ENCODE measurements at regions of chr19 and their contacts with region 1.

Region 1: DNA sequence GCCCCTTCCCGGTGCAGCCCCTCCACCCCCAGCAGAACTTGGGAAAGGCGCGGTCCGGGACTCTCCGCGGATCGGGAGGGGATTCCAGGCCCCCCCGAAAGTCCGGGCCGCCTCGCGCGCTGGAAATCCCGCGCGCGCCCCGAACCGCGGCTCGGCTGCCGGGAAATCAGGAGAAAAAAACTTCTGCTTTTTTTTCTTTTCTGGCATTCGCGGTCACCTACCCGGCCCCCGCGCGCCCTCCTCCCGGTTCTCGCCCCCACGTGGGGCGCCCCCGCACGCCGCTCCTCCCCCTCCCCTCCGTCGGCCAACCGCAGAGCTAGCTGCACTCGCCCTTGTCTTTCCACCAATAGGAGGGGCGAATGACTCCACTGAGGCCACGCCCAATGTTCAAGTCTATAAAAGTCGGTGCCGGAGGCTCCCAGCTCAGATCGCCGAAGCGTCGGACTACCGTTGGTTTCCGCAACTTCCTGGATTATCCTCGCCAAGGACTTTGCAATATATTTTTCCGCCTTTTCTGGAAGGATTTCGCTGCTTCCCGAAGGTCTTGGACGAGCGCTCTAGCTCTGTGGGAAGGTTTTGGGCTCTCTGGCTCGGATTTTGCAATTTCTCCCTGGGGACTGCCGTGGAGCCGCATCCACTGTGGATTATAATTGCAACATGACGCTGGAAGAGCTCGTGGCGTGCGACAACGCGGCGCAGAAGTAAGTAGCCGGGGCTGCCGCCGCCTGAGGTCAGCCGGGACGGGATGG is at the start of gene GADD45B:
- DNase-seq: peak; percentile 98
- ATAC-seq: peak; percentile 46
- H3K4me3 Mint-ChIP-seq: peak within 1 kb of the TSS; percentile 94
- H3K27ac Mint-ChIP-seq: peak within 1 kb of the TSS; percentile 87
- H3K4me1 Mint-ChIP-seq: peaks cover 10% of the 10 kb centered on the region
- H3K27me3 Mint-ChIP-seq: no peaks in the 10 kb centered on the region
- total RNA-seq, gene GADD45B: 83.1 to 85.4 TPM

Region 2: DNA sequence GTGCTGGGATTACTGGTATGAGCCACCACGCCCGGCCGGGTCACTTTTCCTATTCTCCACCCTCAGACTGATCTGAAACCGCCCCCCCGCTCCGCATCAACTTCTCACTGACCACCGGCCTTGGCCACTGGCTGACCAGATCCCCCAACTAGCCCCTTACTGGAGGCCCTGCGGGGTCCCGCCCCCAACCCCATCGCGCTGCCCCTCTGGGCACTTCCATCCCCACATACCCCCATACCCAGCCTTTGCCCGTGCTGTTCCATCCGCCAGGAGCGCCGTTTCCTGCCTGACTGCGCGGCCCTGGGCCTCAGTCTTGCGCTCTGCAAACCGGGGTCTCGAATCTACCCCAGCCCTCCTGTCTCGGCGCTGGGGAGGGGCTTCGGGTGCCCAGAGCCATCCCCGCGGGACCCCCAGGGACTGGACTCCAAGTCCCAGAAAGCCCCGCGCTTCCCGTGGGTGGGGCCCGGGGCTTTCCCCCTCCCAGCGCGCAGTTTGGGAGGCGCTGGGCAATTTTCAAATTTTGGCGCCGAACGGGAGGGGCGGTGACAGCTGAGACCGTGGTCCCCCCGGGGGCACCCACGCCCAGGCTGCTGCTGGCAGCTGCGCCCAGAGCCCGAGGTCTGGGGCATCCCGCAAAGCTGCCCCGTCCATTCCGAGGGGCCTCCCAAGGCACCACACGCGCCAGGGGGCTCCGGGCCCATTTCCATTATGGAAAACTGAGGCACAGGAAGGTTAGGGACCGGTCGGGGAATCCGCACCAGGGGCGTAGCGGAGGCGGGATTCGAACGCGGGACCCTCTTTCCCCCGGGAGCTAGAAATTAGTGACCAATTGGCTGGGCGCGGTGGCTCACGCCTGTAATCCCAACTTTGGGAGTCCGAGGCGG is 13.9 kb before region 1 on chr19:
- POLR2A ChIA-PET with region 1: interaction called, 50 read pairs
- DNase-seq: peak; percentile 82
- ATAC-seq: peak; percentile 84
- H3K4me3 Mint-ChIP-seq: peak overlapping the region; percentile 98
- H3K27ac Mint-ChIP-seq: peak overlapping the region; percentile 96
- H3K4me1 Mint-ChIP-seq: peaks cover 11% of the 10 kb centered on the region
- H3K27me3 Mint-ChIP-seq: no peaks in the 10 kb centered on the region

Region 3: GRCh38 chr19:2507109-2507508 is 31.2 kb after region 1 on chr19:
- POLR2A ChIA-PET with region 1: interaction called, 73 read pairs
- DNase-seq: no peak
- ATAC-seq: peak; percentile 60
- H3K4me3 Mint-ChIP-seq: peak overlapping the region; percentile 61
- H3K27ac Mint-ChIP-seq: peak overlapping the region; percentile 85
- H3K4me1 Mint-ChIP-seq: peaks cover 20% of the 10 kb centered on the region
- H3K27me3 Mint-ChIP-seq: no peaks in the 10 kb centered on the region

Region 4: DNA sequence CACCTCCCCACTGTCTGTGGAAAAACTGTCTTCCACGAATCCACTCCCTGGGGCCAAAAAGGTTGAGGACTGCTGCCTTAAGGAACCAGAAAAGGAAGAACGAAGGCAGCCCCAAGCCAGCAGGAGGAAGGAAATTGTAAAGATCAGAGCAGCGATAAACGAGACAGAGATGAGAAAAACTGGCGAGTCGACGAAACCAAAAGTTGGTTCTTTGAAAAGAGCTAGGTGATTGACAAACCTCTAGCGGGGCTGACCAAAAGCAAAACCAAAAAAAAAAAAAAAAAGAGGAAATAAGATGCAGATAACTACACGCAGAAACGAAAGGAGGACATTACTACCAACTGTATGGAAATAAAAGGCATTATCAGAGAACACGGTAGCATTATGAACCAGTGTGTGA is 77.0 kb after region 1 on chr19:
- POLR2A ChIA-PET with region 1: interaction called, 139 read pairs
- DNase-seq: no peak
- ATAC-seq: peak; percentile 84
- H3K4me3 Mint-ChIP-seq: peak overlapping the region; percentile 83
- H3K27ac Mint-ChIP-seq: peak overlapping the region; percentile 89
- H3K4me1 Mint-ChIP-seq: peaks cover 29% of the 10 kb centered on the region
- H3K27me3 Mint-ChIP-seq: no peaks in the 10 kb centered on the region

Region 5: DNA sequence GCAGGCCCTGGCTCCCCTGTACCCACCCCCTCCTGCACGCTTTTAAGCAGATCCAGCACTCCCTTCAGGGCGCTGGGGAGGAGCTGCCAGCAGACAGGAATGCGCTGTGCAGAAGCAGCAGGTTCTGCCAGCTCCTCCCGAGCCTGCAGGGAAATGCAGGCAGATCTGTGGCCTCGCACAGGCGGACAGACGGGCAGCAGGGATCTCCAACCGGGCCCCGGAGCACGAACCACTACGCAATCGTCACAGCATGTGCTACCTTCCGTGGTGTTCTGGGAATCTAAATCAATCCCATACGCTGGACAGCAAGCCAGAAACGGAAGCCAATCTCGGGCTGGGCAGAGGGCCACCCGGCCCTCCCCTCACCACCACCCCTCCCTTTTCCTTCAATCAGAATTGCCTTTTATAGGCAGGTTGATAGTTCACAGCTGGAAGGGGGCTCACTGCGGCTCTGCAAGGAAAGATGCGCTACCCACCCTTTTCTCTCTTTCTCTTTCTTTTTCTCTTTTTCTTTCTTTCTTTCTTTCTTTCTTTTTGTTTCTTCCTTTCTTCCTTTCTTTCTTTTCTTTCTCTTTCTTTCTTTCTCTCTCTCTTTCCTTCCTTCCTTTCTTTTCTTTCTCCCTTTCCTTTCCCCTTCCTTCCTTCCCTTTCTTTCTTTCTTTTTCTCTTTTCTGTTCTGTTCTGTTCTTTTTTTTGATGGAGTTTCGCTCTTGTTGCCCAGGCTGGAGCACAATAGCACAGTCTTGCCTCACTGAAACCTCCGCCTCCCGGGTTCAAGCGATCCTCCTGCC is 126.7 kb after region 1 on chr19:
- POLR2A ChIA-PET with region 1: interaction called, 207 read pairs
- DNase-seq: no peak
- ATAC-seq: no peak
- H3K4me3 Mint-ChIP-seq: no peak overlapping the region
- H3K27ac Mint-ChIP-seq: no peak overlapping the region
- H3K4me1 Mint-ChIP-seq: peaks cover 11% of the 10 kb centered on the region
- H3K27me3 Mint-ChIP-seq: peaks cover 2% of the 10 kb centered on the region

Region 6: DNA sequence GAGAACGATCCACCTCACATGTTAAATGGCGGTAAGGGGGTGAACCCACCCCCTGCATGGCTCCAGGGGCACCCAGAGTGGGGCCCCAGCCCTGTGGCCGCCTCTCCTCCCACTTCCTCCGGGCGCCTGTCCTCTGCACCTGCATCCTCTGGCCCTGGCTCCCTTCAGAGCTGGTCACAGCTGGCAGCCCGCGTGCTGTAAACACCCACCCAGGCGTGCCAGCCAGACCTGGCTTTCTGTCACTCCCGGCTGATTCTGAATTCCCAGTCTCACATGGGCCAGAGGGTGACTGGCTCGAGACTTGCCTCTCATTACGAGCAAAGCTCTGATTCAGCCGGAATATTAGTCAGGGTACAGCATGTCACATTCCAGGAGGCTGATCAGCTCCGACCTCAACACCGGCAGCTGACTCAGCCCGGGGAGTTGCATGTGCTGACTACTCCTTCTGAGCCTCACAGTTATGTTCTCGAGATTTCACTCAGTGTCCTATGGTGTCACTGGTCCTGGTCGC is 151.5 kb after region 1 on chr19:
- POLR2A ChIA-PET with region 1: interaction called, 203 read pairs
- DNase-seq: no peak
- ATAC-seq: no peak
- H3K4me3 Mint-ChIP-seq: peak overlapping the region; percentile 5
- H3K27ac Mint-ChIP-seq: peak overlapping the region; percentile 21
- H3K4me1 Mint-ChIP-seq: peaks cover 18% of the 10 kb centered on the region
- H3K27me3 Mint-ChIP-seq: no peaks in the 10 kb centered on the region